ENCODE measurements at regions of chr2 and their contacts with region 1.

Region 1: GRCh38 chr2:105426626-105427292 is 27.9 kb upstream of the FHL2 start:
- DNase-seq: peak in 6 of 10 donors; percentile 49 to 74 (median 64)
- H3K4me3 ChIP-seq: peak overlapping the region in 10 of 59 donors; percentile 0 to 39 (median 19)
- H3K27ac ChIP-seq: peak overlapping the region in 51 of 59 donors; percentile 8 to 88 (median 74)
- H3K27me3 ChIP-seq: no peaks in the 10 kb centered on the region
- CTCF ChIP-seq: no peak

Region 2: DNA sequence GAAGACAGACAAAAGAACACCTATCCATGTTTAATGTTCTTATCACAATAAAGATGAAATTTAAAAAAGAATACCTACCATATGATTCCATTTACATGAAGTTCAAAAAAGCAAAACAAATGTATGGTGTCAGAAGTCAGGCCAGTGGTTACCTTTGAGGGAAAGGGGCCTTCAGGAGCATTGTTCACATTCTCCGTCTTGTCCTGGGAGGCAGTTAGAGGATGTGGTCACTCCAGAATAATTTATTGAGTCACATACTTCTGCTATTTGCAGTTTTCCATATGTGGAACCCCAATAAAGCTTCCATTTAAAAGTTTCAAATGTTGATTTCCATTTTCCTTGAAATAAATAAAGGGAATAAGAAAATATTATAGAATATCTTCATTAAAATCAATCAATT is 614.5 kb before region 1 on chr2:
- intact Hi-C with region 1: no loop called
- DNase-seq: no peak
- H3K4me3 ChIP-seq: no peak overlapping the region
- H3K27ac ChIP-seq: no peak overlapping the region
- H3K27me3 ChIP-seq: no peaks in the 10 kb centered on the region
- CTCF ChIP-seq: no peak

Region 3: GRCh38 chr2:105409717-105410116 is 17.0 kb before region 1 on chr2:
- intact Hi-C with region 1: loop called in 1 of 2 experiments (anchors 2 kb)
- DNase-seq: peak; percentile 25 to 87 (median 77)
- H3K4me3 ChIP-seq: no peak overlapping the region
- H3K27ac ChIP-seq: peak overlapping the region in 25 of 59 donors; percentile 1 to 81 (median 51)
- H3K27me3 ChIP-seq: peaks cover 0 to 14% (median 0%) of the 10 kb centered on the region in 45 donors
- CTCF ChIP-seq: no peak

Region 4: DNA sequence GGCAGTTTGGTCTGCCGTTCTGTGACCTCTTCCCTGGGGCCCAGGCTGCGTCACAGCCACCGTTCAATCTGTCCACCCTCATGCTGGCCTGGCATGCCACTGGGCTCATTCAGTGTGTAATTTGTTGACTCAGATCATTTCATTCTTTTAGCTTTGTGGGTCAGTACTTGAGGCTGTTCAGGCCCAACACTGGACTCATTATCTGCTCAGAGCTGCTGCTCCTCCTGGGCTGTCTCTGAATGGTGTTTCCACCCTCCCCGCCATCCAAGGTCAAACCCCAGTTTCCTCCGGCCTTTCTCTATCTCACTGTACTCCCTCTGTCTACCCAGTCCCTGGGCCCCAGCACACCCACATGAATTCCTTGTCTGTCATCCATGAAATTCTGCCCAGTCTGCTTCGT is 165.5 kb after region 1 on chr2:
- intact Hi-C with region 1: no loop called
- DNase-seq: peak in 3 of 10 donors; percentile 29 to 69 (median 50)
- H3K4me3 ChIP-seq: no peak overlapping the region
- H3K27ac ChIP-seq: peak overlapping the region in 2 of 59 donors; percentile 30 to 44
- H3K27me3 ChIP-seq: no peaks in the 10 kb centered on the region
- CTCF ChIP-seq: no peak

Region 5: DNA sequence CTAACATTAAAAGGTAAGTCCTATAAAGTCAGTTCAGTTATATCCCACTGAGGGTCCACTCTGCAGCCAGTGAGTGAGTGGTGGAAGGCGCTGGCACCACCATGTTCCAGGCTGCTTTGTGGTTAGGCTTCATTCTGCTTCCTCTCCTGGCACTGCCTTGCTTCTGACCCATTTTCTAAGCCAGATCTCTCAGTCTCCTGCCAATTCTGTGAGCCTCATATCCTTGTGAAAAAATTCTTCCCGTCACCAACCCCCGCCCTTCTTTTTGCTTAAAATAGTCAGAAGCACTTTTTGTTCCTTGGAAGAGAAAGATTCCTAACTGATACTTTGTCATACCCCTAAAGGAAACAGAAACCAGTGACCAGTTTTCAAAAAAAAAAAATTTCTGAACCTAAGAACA is 178.2 kb after region 1 on chr2:
- intact Hi-C with region 1: no loop called
- DNase-seq: peak in 6 of 10 donors; percentile 25 to 80 (median 58)
- H3K4me3 ChIP-seq: peak overlapping the region in 3 of 59 donors; percentile 1 to 25 (median 24)
- H3K27ac ChIP-seq: peak overlapping the region in 52 of 59 donors; percentile 28 to 91 (median 75)
- H3K27me3 ChIP-seq: no peaks in the 10 kb centered on the region
- CTCF ChIP-seq: no peak

Measured in dorsolateral prefrontal cortex (tissue), 120 donors.